ENCODE measurements at regions of chr5 and their contacts with region 1.

Region 1: DNA sequence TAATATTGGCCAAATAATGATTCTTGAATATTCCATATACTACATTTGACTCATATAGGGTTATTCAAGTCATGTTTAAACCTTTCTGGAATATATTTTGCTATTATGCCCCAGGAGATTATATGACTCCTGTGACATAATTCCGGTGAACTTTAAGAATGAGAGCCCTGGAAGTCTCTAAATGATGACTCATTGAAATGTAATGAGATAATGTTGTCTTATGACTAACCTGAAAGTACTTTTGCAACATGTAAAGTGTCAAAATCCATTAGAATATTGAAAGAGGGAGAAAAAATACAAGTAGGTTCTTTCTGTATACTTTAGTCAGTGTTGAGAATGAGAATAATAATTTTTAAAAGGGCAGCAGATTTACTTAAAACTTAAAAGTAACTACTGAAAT is 830.4 kb downstream of the MAT2B start:
- DNase-seq: no peak
- H3K4me3 ChIP-seq: no peak overlapping the region
- H3K27ac ChIP-seq: no peak overlapping the region
- H3K4me1 ChIP-seq: no peaks in the 10 kb centered on the region
- H3K27me3 ChIP-seq: no peaks in the 10 kb centered on the region
- CTCF ChIP-seq: no peak
- POLR2A ChIP-seq: no peak

Region 2: DNA sequence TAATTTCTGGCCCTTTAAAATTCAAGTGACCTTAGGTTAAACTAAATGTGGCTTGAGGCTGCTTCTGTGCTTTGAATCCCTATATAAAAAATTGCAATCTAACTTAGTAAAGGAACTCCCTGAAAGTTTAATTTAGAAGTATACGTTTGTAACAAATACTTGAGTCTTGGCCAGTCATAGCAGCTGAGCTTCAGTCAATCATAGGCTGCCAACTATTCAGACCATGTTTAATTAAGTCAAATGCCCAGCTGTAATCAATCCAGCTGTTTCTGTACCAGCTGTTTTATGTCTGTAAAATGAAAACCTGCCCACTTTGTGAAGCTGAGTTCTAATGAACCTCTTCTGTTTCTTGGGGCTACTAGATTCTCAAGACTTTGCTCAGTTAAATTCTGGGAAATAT is 70.3 kb before region 1 on chr5:
- intact Hi-C with region 1: no loop called
- DNase-seq: no peak
- H3K4me3 ChIP-seq: no peak overlapping the region
- H3K27ac ChIP-seq: no peak overlapping the region
- H3K4me1 ChIP-seq: no peaks in the 10 kb centered on the region
- H3K27me3 ChIP-seq: no peaks in the 10 kb centered on the region
- CTCF ChIP-seq: no peak
- POLR2A ChIP-seq: no peak

Region 3: DNA sequence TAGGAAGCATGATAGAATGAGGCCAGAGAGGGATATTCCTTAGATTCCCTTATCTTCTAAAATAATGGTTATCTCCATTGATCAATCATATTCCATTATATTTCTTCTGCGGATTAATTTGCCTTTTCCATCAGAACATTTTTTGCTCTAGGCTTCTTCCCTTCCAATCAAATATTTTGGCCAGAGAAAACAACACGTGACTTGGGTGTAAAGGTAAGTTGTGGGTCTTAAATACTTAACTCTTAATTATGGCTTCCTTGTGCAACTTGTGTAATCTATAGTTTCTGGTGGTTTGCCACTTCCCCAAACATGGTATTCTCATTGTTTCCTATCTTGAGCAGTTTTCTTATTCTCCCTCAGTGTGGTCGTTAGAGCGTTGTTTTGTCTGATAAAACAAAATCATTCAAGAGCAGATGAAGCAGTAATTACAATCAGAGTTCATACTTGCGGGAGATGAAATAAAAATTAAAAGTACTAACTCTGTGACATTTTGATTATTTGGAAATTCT is 58.9 kb after region 1 on chr5:
- intact Hi-C with region 1: loop called (anchors 5 kb)
- DNase-seq: no peak
- H3K4me3 ChIP-seq: no peak overlapping the region
- H3K27ac ChIP-seq: no peak overlapping the region
- H3K4me1 ChIP-seq: no peaks in the 10 kb centered on the region
- H3K27me3 ChIP-seq: no peaks in the 10 kb centered on the region
- CTCF ChIP-seq: no peak
- POLR2A ChIP-seq: no peak

Measured in breast epithelium (tissue), 4 donors.